ENCODE measurements at regions of chr4 and their contacts with region 1.

Region 1: DNA sequence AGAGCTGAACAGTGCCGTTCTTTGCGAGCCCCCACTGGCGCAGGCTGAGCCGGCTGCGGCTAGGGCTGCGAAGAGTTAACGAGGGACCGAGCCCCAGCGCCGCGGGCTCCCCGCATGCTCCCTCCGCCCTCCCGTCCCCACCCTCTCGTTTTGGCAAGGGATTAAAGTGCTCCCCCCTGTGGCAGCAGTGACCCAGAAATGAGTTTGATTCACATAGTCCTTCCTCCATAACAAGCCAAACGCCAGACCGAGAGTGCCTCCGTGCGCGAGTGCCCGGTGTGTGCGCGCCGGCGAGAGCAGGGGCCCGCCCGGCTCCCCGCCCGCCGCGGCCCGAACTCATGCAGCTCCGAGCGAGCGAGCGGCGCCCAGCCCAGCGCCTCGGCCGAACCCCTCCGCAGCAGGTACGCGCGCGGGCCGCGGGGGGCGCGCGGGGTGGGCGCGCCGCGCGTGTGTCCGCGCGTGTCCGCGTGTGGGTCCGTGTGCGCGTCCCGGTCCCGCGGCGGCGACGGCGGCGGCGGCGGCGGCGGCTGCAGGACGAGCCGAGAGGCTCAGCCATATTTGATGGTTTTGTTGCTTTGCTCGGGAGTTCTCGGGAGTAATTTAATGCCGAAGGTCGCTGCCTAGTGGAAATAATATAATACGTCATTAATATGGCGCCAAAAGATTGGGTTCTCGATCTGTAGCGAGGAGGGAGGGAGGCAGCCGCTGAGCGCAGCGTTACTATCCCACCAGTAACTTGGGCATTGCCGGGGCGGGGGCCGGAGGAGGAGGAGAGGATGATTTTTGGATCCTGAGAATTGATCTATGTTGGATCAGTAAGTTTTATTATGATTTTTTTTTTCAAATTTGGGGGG is at the start of gene JADE1:
- DNase-seq: peak; percentile 93 to 94
- ATAC-seq: peak; percentile 87
- H3K4me3 ChIP-seq: peak within 1 kb of the TSS; percentile 64 to 72
- H3K27ac ChIP-seq: peak within 1 kb of the TSS; percentile 84 to 90
- H3K4me1 ChIP-seq: no peaks in the 10 kb centered on the region
- H3K27me3 ChIP-seq: no peaks in the 10 kb centered on the region
- total RNA-seq, gene JADE1: 32.2 to 32.8 TPM

Region 2: GRCh38 chr4:128386761-128387599 is 422.7 kb before region 1 on chr4:
- intact Hi-C with region 1: loop called in 1 of 2 experiments (anchors 5 kb)
- DNase-seq: peak; percentile 95
- ATAC-seq: peak; percentile 95
- H3K4me3 ChIP-seq: no peak overlapping the region
- H3K27ac ChIP-seq: peak overlapping the region in 1 of 2 donors; percentile 52
- H3K4me1 ChIP-seq: peaks cover 0 to 3% of the 10 kb centered on the region in 2 donors
- H3K27me3 ChIP-seq: no peaks in the 10 kb centered on the region

Region 3: DNA sequence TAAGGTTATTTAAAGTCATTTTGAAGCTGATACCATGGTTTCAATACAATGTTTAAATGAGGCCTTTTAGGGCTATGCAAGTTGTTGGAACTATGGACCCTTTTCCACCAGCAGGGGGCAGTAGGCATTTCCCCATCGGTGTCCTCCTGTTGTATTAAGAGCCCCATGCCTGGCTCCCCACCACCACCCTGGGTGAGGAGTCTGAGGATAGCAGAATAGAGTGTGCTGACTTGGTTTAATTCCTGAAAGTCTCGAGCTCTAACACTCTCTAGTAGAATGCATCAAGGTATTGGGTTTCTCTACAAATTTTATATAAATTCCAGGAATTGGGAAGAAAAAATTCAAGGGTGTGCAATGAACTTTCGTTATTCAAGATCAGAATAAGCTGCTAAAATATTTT is 235.0 kb before region 1 on chr4:
- intact Hi-C with region 1: loop called (anchors 5 to 10 kb)
- DNase-seq: peak in 1 of 2 donors; percentile 61
- ATAC-seq: no peak
- H3K4me3 ChIP-seq: no peak overlapping the region
- H3K27ac ChIP-seq: no peak overlapping the region
- H3K4me1 ChIP-seq: peaks cover 0 to 3% of the 10 kb centered on the region in 2 donors
- H3K27me3 ChIP-seq: no peaks in the 10 kb centered on the region

Region 4: DNA sequence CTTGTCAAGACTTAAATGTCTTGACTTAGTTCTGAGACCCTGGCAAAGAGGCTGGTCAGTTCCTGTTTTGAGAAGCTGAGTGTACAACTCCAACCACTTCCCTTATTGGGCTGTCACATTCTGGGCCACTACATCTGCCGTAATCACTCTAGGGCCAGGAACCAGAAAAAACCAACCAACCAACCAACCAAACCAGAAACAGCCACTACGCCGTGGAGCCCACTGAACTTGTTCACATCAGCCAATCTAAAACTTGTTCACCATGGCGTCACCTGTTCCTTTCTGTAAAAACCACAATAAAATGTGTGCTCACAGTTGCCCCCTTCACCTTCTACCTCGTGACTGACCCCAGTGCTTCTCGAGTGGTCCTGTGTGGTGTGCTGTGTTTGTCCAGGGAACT is 107.1 kb after region 1 on chr4:
- intact Hi-C with region 1: no loop called
- DNase-seq: peak in 1 of 2 donors; percentile 61
- ATAC-seq: no peak
- H3K4me3 ChIP-seq: no peak overlapping the region
- H3K27ac ChIP-seq: no peak overlapping the region
- H3K4me1 ChIP-seq: peaks cover 0 to 2% of the 10 kb centered on the region in 2 donors
- H3K27me3 ChIP-seq: no peaks in the 10 kb centered on the region

Measured in aorta (tissue), 5 donors.